ENCODE measurements at regions of chr3 and their contacts with region 1.

Region 1: DNA sequence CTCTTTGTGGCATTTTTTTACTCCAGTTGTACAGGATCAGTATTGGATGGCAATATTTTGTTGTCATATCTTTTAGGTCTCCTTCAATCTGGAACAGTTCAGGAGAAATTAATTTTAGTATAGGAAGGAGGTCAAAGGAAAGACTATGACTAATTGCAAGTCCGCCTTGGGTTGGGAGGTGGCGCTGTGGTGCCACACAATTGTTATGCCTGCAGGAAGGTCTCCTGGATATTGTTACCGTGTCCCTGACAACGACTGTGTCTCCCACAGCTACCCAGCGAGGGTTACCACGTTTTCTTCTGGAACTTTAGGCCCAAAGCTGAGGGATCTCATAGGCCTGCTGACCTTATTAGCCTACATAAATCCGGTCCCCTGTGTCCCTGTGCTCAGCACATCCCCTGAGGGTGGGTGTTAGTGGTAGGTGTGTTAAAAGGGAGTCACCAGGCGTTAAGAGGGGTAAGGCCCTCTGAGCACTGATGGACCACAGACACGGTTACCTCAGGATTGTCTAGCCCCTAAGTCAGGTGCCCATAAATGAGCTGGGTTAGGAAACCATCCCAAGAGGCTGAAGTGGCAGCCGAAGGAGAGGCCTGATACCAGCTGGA is 31.5 kb downstream of the KCNAB1 start:
- DNase-seq: peak; percentile 84
- H3K4me3 Mint-ChIP-seq: no peak overlapping the region
- H3K27ac Mint-ChIP-seq: no peak overlapping the region
- H3K4me1 Mint-ChIP-seq: peaks cover 6% of the 10 kb centered on the region
- H3K27me3 Mint-ChIP-seq: peaks cover 18% of the 10 kb centered on the region

Region 2: DNA sequence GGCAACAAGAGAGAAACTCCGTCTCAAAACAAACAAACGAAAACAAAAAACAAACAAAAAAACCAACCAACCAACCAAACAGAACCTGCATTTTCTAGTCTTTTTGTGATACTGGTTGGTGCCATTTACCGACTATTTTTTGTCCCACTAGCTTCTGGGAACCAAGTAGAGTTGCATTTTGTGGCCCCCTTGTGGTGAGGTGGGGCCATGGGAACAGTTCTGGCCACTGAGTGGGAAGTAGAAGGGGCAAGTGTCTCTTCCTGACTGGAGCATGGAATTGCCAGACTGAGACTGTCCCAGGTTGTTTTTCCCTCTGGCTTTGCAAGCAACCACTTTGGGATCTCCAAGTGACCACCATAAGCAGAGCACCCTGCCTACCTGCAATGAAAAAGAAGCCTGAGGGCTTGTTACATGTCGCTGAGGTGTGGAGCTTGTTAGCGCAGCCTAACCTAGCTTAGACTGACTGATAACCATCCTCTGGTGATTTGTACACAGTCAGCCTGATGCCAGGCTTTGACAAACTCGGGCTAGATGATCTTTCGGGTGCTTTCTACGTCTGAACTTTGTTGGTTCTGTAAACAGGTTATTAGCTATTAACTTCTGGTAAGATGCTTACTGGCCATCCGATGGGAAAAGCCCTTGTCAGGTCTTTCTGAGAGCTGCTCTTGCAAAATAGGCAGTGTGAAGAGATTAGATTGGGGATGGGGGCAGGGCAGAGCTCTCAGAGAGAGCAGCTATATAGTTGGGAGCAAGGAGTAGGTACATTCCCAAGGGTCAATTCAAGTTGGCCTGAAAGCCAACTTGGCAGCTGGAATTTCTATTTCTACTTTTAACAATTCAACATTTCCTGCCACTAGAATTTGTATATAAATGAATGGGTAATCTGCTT is 230.8 kb after region 1 on chr3:
- intact Hi-C with region 1: loop called (anchors 1 kb)
- DNase-seq: peak; percentile 68
- H3K4me3 Mint-ChIP-seq: no peak overlapping the region
- H3K27ac Mint-ChIP-seq: no peak overlapping the region
- H3K4me1 Mint-ChIP-seq: no peaks in the 10 kb centered on the region
- H3K27me3 Mint-ChIP-seq: peaks cover 19% of the 10 kb centered on the region

Region 3: DNA sequence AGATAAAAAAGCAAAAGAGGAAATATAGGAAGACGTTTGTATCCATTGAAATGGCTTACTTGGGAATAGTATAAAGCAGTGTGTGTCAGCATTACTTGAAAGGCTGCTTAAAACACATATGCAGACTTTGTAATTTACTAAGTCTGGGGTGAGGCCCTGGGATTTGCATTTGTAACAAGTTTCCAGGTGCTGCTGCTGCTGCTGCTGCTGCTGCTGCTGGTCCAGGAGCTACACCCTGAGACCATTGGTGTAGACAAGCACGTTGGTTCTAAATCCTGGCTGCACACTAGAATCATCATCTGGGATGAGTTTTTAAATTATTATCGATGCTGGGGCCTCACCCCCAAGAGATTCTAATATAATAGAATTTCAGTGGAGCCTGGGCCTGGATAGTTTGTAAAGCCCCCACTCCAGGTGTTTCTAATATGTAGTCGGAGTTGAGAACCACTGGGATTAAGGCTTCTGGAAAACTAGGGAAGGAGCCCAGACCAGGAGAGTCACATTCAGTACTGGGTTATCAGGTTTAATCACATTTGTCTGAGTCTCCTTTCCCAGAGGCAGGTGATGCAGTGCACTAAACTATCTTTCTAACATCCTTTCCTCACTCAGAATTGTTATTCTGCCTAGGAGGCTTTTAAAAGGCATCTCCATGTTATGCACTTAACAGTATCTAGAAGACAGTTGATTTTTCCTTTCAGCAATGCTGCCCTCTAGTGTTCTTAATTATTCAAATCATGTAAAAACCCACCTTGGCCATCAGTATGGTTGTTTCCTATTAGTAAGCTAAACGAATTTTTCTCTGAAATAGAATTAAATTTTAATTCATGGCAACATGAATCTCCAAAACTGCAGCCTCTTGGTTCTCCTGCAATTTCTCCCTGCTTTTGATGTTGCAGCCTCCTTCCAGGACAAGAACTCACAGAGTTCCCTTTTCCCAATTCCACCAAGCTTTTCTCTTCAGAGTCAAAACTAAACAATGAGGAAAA is 357.6 kb after region 1 on chr3:
- intact Hi-C with region 1: loop called (anchors 1 kb)
- DNase-seq: peak; percentile 74
- H3K4me3 Mint-ChIP-seq: no peak overlapping the region
- H3K27ac Mint-ChIP-seq: no peak overlapping the region
- H3K4me1 Mint-ChIP-seq: peaks cover 15% of the 10 kb centered on the region
- H3K27me3 Mint-ChIP-seq: peaks cover 37% of the 10 kb centered on the region

Region 4: DNA sequence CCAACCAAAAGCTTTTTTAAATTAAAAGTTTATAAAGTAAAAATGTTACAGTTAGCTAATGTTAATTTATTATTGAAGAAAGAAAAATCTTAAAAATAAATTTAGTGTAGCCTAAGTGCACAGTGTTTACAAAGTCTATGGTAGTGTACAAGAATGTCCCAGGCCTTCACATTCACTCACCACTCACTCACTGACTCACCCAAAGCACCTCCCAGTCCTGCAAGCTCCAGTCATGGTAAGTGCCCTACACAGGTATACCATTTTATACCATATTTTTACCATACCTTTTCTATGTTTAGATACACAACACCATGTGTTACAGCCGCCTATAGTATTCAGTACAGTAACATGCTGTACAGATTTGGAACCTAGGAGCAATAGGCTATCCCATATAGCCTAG is 373.9 kb after region 1 on chr3:
- intact Hi-C with region 1: no loop called
- DNase-seq: no peak
- H3K4me3 Mint-ChIP-seq: no peak overlapping the region
- H3K27ac Mint-ChIP-seq: no peak overlapping the region
- H3K4me1 Mint-ChIP-seq: peaks cover 16% of the 10 kb centered on the region
- H3K27me3 Mint-ChIP-seq: peaks cover 40% of the 10 kb centered on the region

Region 5: GRCh38 chr3:156536524-156537231 is 384.8 kb after region 1 on chr3:
- intact Hi-C with region 1: loop called (anchors 1 kb)
- DNase-seq: no peak
- H3K4me3 Mint-ChIP-seq: no peak overlapping the region
- H3K27ac Mint-ChIP-seq: no peak overlapping the region
- H3K4me1 Mint-ChIP-seq: peaks cover 6% of the 10 kb centered on the region
- H3K27me3 Mint-ChIP-seq: no peaks in the 10 kb centered on the region

Region 6: GRCh38 chr3:156816800-156817645 is 665.1 kb after region 1 on chr3:
- intact Hi-C with region 1: loop called (anchors 10 kb)
- DNase-seq: peak; percentile 97
- H3K4me3 Mint-ChIP-seq: peak overlapping the region; percentile 92
- H3K27ac Mint-ChIP-seq: peak overlapping the region; percentile 98
- H3K4me1 Mint-ChIP-seq: peaks cover 52% of the 10 kb centered on the region
- H3K27me3 Mint-ChIP-seq: no peaks in the 10 kb centered on the region

Region 7: GRCh38 chr3:157081681-157082210 is 929.8 kb after region 1 on chr3:
- intact Hi-C with region 1: loop called (anchors 2 kb)
- DNase-seq: peak; percentile 95
- H3K4me3 Mint-ChIP-seq: no peak overlapping the region
- H3K27ac Mint-ChIP-seq: peak overlapping the region; percentile 18
- H3K4me1 Mint-ChIP-seq: peaks cover 45% of the 10 kb centered on the region
- H3K27me3 Mint-ChIP-seq: no peaks in the 10 kb centered on the region

Region 8: DNA sequence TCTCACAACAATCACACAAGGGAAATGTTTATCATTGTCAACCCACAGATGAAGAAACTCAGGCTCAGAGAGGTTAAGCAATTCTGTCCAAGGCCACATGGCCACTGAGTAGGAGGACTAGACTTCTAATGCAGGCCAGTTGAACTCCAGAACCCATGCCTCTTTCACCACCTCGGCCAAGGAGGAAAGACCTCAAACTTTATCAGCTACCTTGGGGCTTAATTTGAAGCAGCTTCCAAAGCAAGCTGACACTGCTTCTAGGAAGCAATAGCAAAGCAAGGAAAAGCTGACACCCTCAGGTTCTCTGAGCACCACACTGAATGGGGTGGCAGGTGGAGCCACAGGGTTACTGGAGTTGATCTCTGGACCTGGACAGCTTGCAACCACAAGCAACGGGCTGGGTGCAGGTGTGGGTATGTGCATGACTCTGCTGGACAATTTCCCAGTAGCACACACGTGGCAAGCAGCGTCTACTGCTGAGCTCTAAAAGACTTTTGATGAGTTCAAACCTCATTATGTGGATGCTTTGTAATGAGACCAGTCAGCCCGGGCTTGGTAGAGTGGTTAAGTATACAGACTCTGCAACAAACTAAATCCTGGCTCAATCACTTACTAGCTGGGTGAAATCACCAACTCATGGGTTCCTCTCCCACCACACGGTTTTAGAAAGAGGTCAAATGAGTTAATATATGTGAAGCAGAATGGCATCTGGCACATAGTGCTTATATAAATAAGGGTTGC is 984.9 kb after region 1 on chr3:
- intact Hi-C with region 1: loop called (anchors 1 kb)
- DNase-seq: no peak
- H3K4me3 Mint-ChIP-seq: peak overlapping the region; percentile 66
- H3K27ac Mint-ChIP-seq: no peak overlapping the region
- H3K4me1 Mint-ChIP-seq: peaks cover 55% of the 10 kb centered on the region
- H3K27me3 Mint-ChIP-seq: no peaks in the 10 kb centered on the region

Measured in activated CD4-positive, alpha-beta T cell treated with anti-CD3 and anti-CD28 coated beads, Interleukin-2, amount 10 ng/mL, durations not matched to agents 24 days and 14 days (primary cell).